CD4-positive, alpha-beta memory T cell (primary cell): ENCODE measurements at regions of chr5 and their contacts with region 1.

Region 1: DNA sequence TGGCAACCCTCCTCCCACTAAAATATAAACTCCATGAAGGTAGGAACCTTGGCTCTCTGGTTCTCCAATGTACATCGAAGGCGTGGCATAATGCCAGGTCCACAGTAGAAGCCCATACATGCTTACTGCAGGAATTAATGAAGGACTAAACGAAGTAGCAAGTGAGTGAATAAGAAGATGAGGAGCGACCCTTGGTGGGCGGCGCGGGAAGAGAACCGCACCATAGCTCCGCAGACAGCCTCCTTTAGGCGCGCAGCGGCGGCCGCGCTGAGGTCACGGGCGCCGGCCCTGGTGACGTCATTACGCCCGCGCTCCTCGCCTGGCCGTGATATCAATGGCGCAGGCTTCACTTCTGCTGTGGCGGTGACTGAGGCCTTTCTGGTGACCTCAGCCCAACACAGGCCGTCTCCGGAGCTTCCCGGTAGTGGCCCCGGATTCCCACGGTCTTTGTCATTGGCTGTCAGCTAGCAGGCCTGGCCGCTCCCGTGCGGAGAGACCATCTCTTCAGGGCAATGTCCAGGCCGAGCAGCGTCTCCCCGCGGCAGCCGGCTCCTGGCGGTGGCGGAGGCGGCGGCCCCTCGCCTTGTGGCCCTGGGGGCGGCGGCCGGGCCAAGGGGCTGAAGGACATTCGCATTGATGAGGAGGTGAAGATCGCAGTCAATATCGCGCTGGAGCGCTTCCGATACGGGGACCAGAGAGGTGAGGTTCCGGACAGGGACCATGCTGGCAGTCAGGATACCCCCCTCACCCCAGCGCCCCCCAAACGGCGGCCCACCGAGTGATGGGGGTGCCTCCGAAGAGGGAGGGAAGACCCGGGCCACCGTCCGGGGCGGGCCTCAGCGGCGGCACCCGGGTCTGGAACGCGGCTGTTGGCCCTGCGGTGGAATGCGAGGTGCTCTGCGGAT is at the start of gene YTHDC2:
- DNase-seq: peak; percentile 86 to 89 (median 87)
- H3K4me3 ChIP-seq: peak within 1 kb of the TSS; percentile 53 to 68
- H3K4me3 Mint-ChIP-seq: peak within 1 kb of the TSS; percentile 93 to 97 (median 96)
- H3K27ac ChIP-seq: peak within 1 kb of the TSS; percentile 84
- H3K27ac Mint-ChIP-seq: peak within 1 kb of the TSS; percentile 88 to 98 (median 97)
- H3K4me1 ChIP-seq: peaks cover 32% of the 10 kb centered on the region
- H3K4me1 Mint-ChIP-seq: peaks cover 25 to 44% (median 34%) of the 10 kb centered on the region in 4 donors
- H3K27me3 ChIP-seq: no peaks in the 10 kb centered on the region
- H3K27me3 Mint-ChIP-seq: peaks cover 4 to 7% of the 10 kb centered on the region in 2 donors
- total RNA-seq, gene YTHDC2: 42.8 to 46.4 TPM

Region 2: DNA sequence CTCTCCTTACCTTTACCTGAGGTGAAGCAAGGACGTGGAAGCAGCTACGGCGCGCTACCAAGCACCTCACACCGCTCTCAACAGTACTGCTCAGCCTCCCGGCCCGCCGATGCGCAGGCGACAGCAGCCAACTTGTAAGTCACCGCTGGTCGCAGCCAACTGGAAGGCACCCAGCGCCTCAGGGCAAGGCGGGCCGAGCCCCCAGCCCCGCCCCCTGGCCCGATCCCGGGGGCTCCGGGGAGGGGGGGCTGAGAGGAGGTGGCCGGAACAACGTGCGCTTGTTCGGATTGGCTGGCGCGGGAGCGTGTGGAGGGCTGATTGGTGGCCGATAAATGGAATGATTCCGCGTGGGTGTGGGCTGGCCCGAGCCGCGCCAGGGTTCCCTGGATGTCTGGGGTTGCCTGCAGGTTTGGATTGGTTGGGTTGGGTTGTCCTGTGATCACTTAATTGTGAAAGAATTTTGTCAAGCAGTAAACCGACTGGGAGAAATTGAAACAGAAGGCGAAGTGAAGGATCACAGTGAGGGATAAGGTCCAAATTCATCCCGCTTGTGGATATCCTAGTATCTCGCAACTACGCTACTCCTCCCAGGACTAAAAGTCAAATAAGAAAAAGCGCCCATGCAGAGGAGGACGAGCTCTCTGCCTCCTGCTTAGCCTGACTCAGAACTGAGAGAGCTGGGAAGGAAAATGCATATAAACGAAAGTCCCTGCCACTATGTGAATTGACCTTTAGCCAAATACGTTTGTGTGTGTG is 2001.1 kb before region 1 on chr5 and contains the start of gene STARD4:
- CTCF ChIA-PET with region 1: no interaction called
- POLR2A ChIA-PET with region 1: no interaction called
- intact Hi-C with region 1: loop called (anchors 10 kb)
- DNase-seq: peak; percentile 91 to 95 (median 93)
- H3K4me3 ChIP-seq: peak within 1 kb of the TSS; percentile 37 to 77
- H3K4me3 Mint-ChIP-seq: peak within 1 kb of the TSS; percentile 98 to 99 (median 98)
- H3K27ac ChIP-seq: peak within 1 kb of the TSS; percentile 77
- H3K27ac Mint-ChIP-seq: peak within 1 kb of the TSS; percentile 94 to 99 (median 97)
- H3K4me1 ChIP-seq: peaks cover 35% of the 10 kb centered on the region
- H3K4me1 Mint-ChIP-seq: peaks cover 24 to 48% (median 29%) of the 10 kb centered on the region in 4 donors
- H3K27me3 ChIP-seq: no peaks in the 10 kb centered on the region
- H3K27me3 Mint-ChIP-seq: no peaks in the 10 kb centered on the region
- total RNA-seq, gene STARD4: 12.4 to 17.2 TPM

Region 3: DNA sequence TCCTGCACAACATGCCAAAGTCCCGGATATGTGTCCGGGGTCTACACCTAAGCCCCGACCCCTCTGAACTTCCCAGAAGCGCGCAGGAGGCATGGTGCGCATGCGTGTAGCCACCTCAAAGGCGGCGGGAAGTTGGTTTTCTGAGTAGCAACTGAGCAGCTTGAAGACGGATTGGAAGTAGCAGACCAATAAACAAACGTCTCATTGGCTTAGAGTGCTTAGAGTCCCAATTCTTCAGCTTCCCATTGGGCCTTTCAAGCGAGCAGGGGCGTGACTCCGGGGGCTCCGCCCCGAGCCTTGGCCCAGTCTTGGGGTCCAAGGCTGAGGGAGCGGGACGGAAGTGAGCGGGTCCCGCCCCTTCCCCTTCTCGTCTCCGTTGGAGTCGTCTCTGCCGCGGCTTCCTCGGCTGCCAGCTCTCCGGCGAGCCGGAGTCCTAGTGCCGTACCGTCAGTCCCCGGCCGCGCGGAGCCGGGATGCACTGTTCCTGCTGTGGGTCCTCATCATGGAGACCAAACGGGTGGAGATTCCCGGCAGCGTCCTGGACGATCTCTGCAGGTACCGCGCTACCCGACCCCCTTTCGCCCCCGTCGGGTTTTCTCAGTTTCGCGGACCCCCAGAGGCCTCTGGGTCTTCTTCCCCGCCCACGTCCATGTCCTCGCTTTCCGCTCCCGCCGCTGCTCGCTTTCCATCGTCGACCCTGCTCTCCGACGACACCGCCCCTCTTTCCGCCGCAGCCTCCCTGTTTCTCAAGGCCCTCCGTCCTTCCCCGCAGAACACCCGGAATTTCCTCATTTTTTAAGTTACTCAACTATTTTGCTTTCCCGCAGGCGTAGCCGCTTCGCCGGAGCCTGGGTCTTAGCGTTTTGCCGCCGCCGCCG is 537.0 kb before region 1 on chr5 and contains the start of gene DCP2:
- CTCF ChIA-PET with region 1: interaction called, 4 read pairs
- POLR2A ChIA-PET with region 1: interaction called, 15 read pairs
- intact Hi-C with region 1: loop called (anchors 5 kb)
- DNase-seq: peak; percentile 95 to 97 (median 97)
- H3K4me3 ChIP-seq: peak within 1 kb of the TSS; percentile 77 to 79
- H3K4me3 Mint-ChIP-seq: peak within 1 kb of the TSS; percentile 96 to 100 (median 99)
- H3K27ac ChIP-seq: peak within 1 kb of the TSS; percentile 85
- H3K27ac Mint-ChIP-seq: peak within 1 kb of the TSS; percentile 94 to 98 (median 97)
- H3K4me1 ChIP-seq: peaks cover 45% of the 10 kb centered on the region
- H3K4me1 Mint-ChIP-seq: peaks cover 31 to 63% (median 43%) of the 10 kb centered on the region in 4 donors
- H3K27me3 ChIP-seq: no peaks in the 10 kb centered on the region
- H3K27me3 Mint-ChIP-seq: peaks cover 0 to 4% of the 10 kb centered on the region in 2 donors
- total RNA-seq, gene DCP2: 116 to 123 TPM

Region 4: GRCh38 chr5:113336975-113337374 is 176.7 kb before region 1 on chr5:
- CTCF ChIA-PET with region 1: interaction called, 77 read pairs
- POLR2A ChIA-PET with region 1: interaction called, 3 read pairs
- intact Hi-C with region 1: loop called (anchors 1 kb)
- DNase-seq: no peak
- H3K4me3 ChIP-seq: no peak overlapping the region
- H3K4me3 Mint-ChIP-seq: no peak overlapping the region
- H3K27ac ChIP-seq: no peak overlapping the region
- H3K27ac Mint-ChIP-seq: no peak overlapping the region
- H3K4me1 ChIP-seq: peaks cover 6% of the 10 kb centered on the region
- H3K4me1 Mint-ChIP-seq: peaks cover 3 to 15% (median 8%) of the 10 kb centered on the region in 4 donors
- H3K27me3 ChIP-seq: no peaks in the 10 kb centered on the region
- H3K27me3 Mint-ChIP-seq: peaks cover 0 to 3% of the 10 kb centered on the region in 2 donors

Region 5: DNA sequence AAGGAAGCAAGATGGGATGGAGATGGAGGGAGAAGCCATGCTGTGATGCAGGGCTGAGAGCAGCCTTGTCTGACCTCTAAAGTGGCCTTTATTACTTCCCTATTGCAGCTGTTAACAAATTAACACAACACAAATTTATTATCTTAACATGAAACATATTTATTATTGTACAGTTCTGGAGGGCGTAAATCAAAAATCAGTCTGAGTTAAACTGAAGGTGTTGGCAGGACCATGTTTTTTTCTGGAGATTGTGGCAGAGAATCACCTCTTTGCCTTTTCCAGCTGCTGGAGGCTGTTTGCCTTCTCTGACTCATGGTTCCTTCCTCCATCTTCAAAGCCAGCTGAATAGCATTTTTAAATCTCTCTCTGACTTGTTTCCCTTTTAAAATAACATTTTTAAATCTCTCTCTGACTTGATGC is 18.2 kb before region 1 on chr5:
- CTCF ChIA-PET with region 1: interaction called, 3 read pairs
- POLR2A ChIA-PET with region 1: no interaction called
- intact Hi-C with region 1: loop called (anchors 2 kb)
- DNase-seq: no peak
- H3K4me3 ChIP-seq: no peak overlapping the region
- H3K4me3 Mint-ChIP-seq: no peak overlapping the region
- H3K27ac ChIP-seq: no peak overlapping the region
- H3K27ac Mint-ChIP-seq: no peak overlapping the region
- H3K4me1 ChIP-seq: no peaks in the 10 kb centered on the region
- H3K4me1 Mint-ChIP-seq: no peaks in the 10 kb centered on the region
- H3K27me3 ChIP-seq: no peaks in the 10 kb centered on the region
- H3K27me3 Mint-ChIP-seq: peaks cover 22 to 27% of the 10 kb centered on the region in 2 donors